ENCODE measurements at regions of chr10 and their contacts with region 1.

Region 1: GRCh38 chr10:53702489-53702888 is 929.9 kb upstream of the MBL2 start:
- DNase-seq: no peak
- ATAC-seq: no peak
- H3K4me3 ChIP-seq: no peak overlapping the region
- H3K27ac ChIP-seq: no peak overlapping the region
- H3K4me1 ChIP-seq: no peaks in the 10 kb centered on the region
- H3K27me3 ChIP-seq: no peaks in the 10 kb centered on the region
- CTCF ChIP-seq: no peak
- POLR2A ChIP-seq: no peak
- RAD21 ChIP-seq: no peak

Region 2: GRCh38 chr10:53619671-53620070 is 82.8 kb before region 1 on chr10:
- CTCF ChIA-PET with region 1: no interaction called
- POLR2A ChIA-PET with region 1: no interaction called
- dilution Hi-C with region 1: no loop called
- in situ Hi-C with region 1: loop called (anchors 5 kb)
- intact Hi-C with region 1: no loop called
- DNase-seq: no peak
- ATAC-seq: no peak
- H3K4me3 ChIP-seq: no peak overlapping the region
- H3K27ac ChIP-seq: no peak overlapping the region
- H3K4me1 ChIP-seq: no peaks in the 10 kb centered on the region
- H3K27me3 ChIP-seq: no peaks in the 10 kb centered on the region
- CTCF ChIP-seq: no peak
- POLR2A ChIP-seq: no peak
- RAD21 ChIP-seq: no peak